ENCODE measurements at regions of chr10 and their contacts with region 1.

Region 1: DNA sequence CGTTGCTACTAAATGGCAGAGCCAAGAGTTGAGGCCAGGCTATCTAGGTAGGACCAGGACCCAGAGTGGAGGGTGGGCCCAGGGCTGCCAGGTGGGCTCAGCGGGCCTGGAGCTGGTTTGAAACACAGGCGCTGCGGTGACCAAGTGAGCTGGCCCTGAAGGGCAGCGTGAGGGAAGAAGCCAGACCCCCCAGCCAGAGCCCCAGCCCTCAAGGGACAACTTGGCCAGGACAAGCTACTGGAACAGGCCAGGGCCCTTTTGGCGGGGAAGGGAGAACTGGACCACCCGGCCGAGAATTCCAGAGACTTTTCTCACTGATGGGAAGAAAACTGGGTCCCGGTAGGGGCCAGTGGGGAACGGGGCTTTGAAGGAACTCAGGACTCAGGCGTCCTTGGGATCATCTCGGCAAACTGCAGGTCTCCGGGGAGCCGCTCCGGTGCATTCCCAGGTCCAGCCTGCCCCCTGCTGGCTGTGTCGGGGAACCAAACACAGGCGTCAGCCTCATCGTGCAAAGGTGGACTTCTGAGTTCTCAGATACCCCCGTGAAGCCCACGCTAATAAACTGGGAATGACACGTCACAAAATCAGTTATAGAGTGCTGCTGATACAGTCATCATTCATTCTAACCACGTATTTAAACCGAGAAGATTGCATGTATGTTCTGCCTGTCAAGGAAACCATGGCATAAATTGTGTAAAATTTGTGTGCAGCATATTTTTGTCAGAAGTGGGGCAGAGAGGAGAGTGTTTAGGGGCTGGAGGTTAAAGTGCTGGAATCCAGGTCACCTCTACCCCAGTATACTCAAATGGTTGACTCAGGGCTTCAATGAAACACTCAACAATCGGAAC is 76.0 kb upstream of the CPXM2 start:
- DNase-seq: peak; percentile 94
- H3K4me3 ChIP-seq: peak overlapping the region in 3 of 4 donors; percentile 17 to 21 (median 19)
- H3K27ac ChIP-seq: peak overlapping the region in 2 of 4 donors; percentile 16 to 20
- H3K4me1 ChIP-seq: peaks cover 6 to 53% (median 44%) of the 10 kb centered on the region in 4 donors
- H3K27me3 ChIP-seq: peaks cover 0 to 47% (median 3%) of the 10 kb centered on the region in 4 donors
- CTCF ChIP-seq: peak; percentile 88 to 93 (median 92)
- EP300 ChIP-seq: no peak
- POLR2A ChIP-seq: no peak

Region 2: GRCh38 chr10:123433539-123433938 is 534.1 kb before region 1 on chr10:
- intact Hi-C with region 1: no loop called
- DNase-seq: no peak
- H3K4me3 ChIP-seq: no peak overlapping the region
- H3K27ac ChIP-seq: no peak overlapping the region
- H3K4me1 ChIP-seq: no peaks in the 10 kb centered on the region
- H3K27me3 ChIP-seq: peaks cover 0 to 23% (median 0%) of the 10 kb centered on the region in 4 donors
- CTCF ChIP-seq: no peak
- EP300 ChIP-seq: no peak
- POLR2A ChIP-seq: no peak

Region 3: GRCh38 chr10:123582084-123582989 is 385.3 kb before region 1 on chr10:
- intact Hi-C with region 1: loop called (anchors 1 kb)
- DNase-seq: peak; percentile 96
- H3K4me3 ChIP-seq: no peak overlapping the region
- H3K27ac ChIP-seq: no peak overlapping the region
- H3K4me1 ChIP-seq: peaks cover 7 to 25% (median 24%) of the 10 kb centered on the region in 4 donors
- H3K27me3 ChIP-seq: peaks cover 0 to 10% (median 2%) of the 10 kb centered on the region in 4 donors
- CTCF ChIP-seq: peak; percentile 82 to 85 (median 85)
- EP300 ChIP-seq: no peak
- POLR2A ChIP-seq: no peak

Region 4: GRCh38 chr10:123743976-123744411 is 223.6 kb before region 1 on chr10:
- intact Hi-C with region 1: loop called (anchors 10 kb)
- DNase-seq: no peak
- H3K4me3 ChIP-seq: no peak overlapping the region
- H3K27ac ChIP-seq: no peak overlapping the region
- H3K4me1 ChIP-seq: peaks cover 0 to 33% (median 29%) of the 10 kb centered on the region in 4 donors
- H3K27me3 ChIP-seq: no peaks in the 10 kb centered on the region
- CTCF ChIP-seq: no peak
- EP300 ChIP-seq: no peak
- POLR2A ChIP-seq: no peak

Measured in esophagus muscularis mucosa (tissue), 4 donors.